CD4-positive, alpha-beta T cell (primary cell): ENCODE measurements at regions of chr2 and their contacts with region 1.

Region 1: GRCh38 chr2:99154643-99155536 is at the starts of genes LIPT1 and TSGA10:
- DNase-seq: peak; percentile 81 to 97 (median 89)
- ATAC-seq: peak; percentile 93
- H3K4me3 ChIP-seq: peak within 1 kb of the TSS; percentile 69
- H3K4me3 Mint-ChIP-seq: no peak within 1 kb of the TSS
- H3K27ac ChIP-seq: peak within 1 kb of the TSS; percentile 93 to 95
- H3K27ac Mint-ChIP-seq: no peak within 1 kb of the TSS
- H3K4me1 ChIP-seq: peaks cover 21% of the 10 kb centered on the region
- H3K4me1 Mint-ChIP-seq: peaks cover 43% of the 10 kb centered on the region
- H3K27me3 ChIP-seq: no peaks in the 10 kb centered on the region
- H3K27me3 Mint-ChIP-seq: no peaks in the 10 kb centered on the region
- CTCF ChIP-seq: no peak
- total RNA-seq, gene LIPT1: 12.5 to 13.3 TPM
- total RNA-seq, gene TSGA10: 10.6 to 11.0 TPM

Region 2: DNA sequence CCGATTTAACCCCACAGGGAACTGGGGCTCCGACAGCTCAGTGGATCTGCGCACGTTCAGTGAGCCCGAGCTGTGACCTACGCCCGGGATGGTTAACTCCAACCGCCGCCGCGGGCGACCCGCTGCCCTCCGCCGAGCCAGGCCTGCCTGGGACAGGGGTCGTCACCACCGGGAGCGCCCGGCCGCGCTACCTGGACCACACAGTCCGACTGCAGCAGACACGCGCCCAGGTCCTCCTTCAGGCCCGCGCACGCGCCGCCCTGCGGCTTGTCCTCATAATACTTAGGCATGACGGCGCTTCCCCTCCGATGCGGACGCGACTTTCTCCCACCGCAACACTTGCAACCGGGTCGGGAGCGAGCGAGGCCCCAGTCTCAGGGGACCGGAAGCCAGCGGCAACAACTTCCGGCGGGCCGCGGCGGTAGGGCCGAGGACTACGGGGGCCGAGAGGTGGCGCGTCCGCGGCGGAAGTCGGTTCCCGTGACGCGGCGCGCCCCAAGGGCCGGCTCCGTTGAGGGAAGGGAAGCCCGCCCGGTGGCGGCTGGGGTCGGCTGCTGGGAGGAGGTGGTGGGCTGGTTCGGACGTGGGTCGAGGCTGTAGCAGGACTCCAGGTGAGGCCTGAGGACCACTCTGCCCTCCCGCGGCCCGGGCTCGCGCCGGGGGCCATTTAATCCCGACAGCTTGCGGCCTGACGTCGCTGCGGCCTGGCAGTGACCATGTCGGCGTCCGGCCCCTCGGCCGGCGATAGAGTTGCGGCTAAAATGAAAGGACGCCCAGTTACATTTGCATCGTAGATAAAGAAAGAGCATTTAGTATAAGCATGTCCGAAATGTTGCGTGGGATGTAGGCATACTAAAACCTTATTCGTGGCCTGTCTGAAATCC is 546.5 kb before region 1 on chr2 and contains the starts of genes COA5 and UNC50:
- CTCF ChIA-PET with region 1: no interaction called
- POLR2A ChIA-PET with region 1: interaction called, 5 read pairs
- intact Hi-C with region 1: loop called in 1 of 2 experiments (anchors 10 kb)
- DNase-seq: peak; percentile 84 to 95 (median 89)
- ATAC-seq: peak; percentile 83
- H3K4me3 ChIP-seq: peak within 1 kb of the TSS; percentile 77
- H3K4me3 Mint-ChIP-seq: peak within 1 kb of the TSS; percentile 85
- H3K27ac ChIP-seq: peak within 1 kb of the TSS; percentile 87 to 91
- H3K27ac Mint-ChIP-seq: peak within 1 kb of the TSS; percentile 89
- H3K4me1 ChIP-seq: peaks cover 43% of the 10 kb centered on the region
- H3K4me1 Mint-ChIP-seq: peaks cover 72% of the 10 kb centered on the region
- H3K27me3 ChIP-seq: no peaks in the 10 kb centered on the region
- H3K27me3 Mint-ChIP-seq: no peaks in the 10 kb centered on the region
- CTCF ChIP-seq: no peak
- total RNA-seq, gene COA5: 29.2 to 30.1 TPM
- total RNA-seq, gene UNC50: 17.1 to 17.5 TPM

Region 3: DNA sequence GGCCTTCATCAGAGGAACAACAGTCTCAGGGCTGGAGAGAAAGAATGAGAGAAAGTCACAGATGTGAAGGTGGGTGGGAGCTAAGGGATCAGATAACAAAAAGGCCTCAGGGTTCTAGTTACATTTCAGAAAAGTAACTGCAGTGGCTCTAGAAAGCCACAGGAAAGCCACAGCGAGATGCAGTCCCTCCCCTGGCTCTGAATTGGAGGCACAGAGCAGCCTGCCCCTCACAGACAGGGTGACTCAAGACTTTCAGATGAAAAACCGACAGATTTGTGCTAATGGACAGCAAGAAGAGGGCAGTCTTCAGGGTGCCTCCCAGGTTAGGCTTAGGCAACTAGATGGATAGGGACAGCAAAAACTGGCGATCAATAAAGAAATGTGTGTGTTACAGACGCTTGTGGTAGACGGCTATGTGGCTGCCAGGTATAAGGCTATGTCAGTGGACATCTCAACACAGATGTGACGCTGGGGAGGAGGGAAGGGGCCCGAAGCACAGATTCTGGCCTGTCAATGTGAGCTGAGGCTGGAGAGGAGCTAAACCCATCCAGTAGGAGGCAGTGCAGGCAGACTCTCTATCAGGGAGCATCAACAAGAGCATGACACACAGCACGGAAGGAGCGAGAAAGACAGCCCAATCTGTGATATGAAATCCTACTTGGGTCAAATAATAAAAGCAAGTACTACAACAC is 520.3 kb before region 1 on chr2:
- CTCF ChIA-PET with region 1: no interaction called
- POLR2A ChIA-PET with region 1: no interaction called
- intact Hi-C with region 1: loop called in 1 of 2 experiments (anchors 10 kb)
- DNase-seq: peak in 10 of 14 experiments; percentile 28 to 76 (median 48)
- ATAC-seq: peak; percentile 60
- H3K4me3 ChIP-seq: no peak overlapping the region
- H3K4me3 Mint-ChIP-seq: no peak overlapping the region
- H3K27ac ChIP-seq: peak overlapping the region; percentile 9 to 25
- H3K27ac Mint-ChIP-seq: peak overlapping the region; percentile 83
- H3K4me1 ChIP-seq: peaks cover 31% of the 10 kb centered on the region
- H3K4me1 Mint-ChIP-seq: peaks cover 40% of the 10 kb centered on the region
- H3K27me3 ChIP-seq: no peaks in the 10 kb centered on the region
- H3K27me3 Mint-ChIP-seq: no peaks in the 10 kb centered on the region
- CTCF ChIP-seq: no peak

Region 4: DNA sequence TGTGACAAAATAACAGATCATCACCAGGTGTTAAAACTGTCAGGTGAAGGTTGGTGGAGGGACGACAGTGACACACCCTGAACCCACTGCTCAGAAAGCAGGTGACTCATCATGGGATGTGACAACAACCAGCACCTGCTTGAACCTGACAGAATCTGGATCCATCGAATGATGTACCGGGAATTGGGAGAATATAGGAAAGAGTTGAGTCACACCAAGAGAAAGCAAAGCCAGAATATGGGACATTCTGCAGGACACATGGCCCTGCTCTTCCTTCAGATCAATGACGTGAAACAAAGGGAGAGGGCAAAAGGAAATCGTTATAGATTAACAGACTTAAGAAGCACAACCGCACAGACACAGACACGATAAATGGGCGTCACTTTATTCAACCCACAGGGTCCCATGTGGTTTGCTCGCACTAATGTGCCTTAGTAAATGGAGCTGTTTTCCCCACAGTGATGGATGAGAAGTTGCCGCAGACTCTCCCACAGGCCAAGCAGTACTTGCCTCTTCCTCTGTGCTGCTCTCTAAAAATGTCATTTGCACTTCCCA is 319.0 kb before region 1 on chr2:
- CTCF ChIA-PET with region 1: no interaction called
- POLR2A ChIA-PET with region 1: no interaction called
- intact Hi-C with region 1: loop called in 1 of 2 experiments (anchors 10 kb)
- DNase-seq: peak; percentile 36 to 88 (median 51)
- ATAC-seq: peak; percentile 85
- H3K4me3 ChIP-seq: no peak overlapping the region
- H3K4me3 Mint-ChIP-seq: peak overlapping the region; percentile 57
- H3K27ac ChIP-seq: peak overlapping the region; percentile 27 to 48
- H3K27ac Mint-ChIP-seq: peak overlapping the region; percentile 94
- H3K4me1 ChIP-seq: peaks cover 42% of the 10 kb centered on the region
- H3K4me1 Mint-ChIP-seq: peaks cover 46% of the 10 kb centered on the region
- H3K27me3 ChIP-seq: no peaks in the 10 kb centered on the region
- H3K27me3 Mint-ChIP-seq: no peaks in the 10 kb centered on the region
- CTCF ChIP-seq: no peak

Region 5: GRCh38 chr2:99141110-99142108 is 13.5 kb before region 1 on chr2 and contains the start of gene C2orf15:
- CTCF ChIA-PET with region 1: interaction called, 13 read pairs
- POLR2A ChIA-PET with region 1: interaction called, 142 read pairs
- intact Hi-C with region 1: loop called (anchors 1 kb)
- DNase-seq: peak; percentile 92 to 99 (median 97)
- ATAC-seq: peak; percentile 85
- H3K4me3 ChIP-seq: peak within 1 kb of the TSS; percentile 74
- H3K4me3 Mint-ChIP-seq: peak within 1 kb of the TSS; percentile 97
- H3K27ac ChIP-seq: peak within 1 kb of the TSS; percentile 85 to 92
- H3K27ac Mint-ChIP-seq: peak within 1 kb of the TSS; percentile 94
- H3K4me1 ChIP-seq: peaks cover 8% of the 10 kb centered on the region
- H3K4me1 Mint-ChIP-seq: peaks cover 33% of the 10 kb centered on the region
- H3K27me3 ChIP-seq: no peaks in the 10 kb centered on the region
- H3K27me3 Mint-ChIP-seq: no peaks in the 10 kb centered on the region
- CTCF ChIP-seq: no peak
- total RNA-seq, gene C2orf15: 2.1 to 2.8 TPM

Region 6: GRCh38 chr2:99337113-99338028 is 182.5 kb after region 1 on chr2 and contains the start of gene EIF5B:
- CTCF ChIA-PET with region 1: interaction called, 9 read pairs
- POLR2A ChIA-PET with region 1: interaction called, 23 read pairs
- intact Hi-C with region 1: no loop called
- DNase-seq: peak; percentile 82 to 97 (median 93)
- ATAC-seq: peak; percentile 58
- H3K4me3 ChIP-seq: peak within 1 kb of the TSS; percentile 89
- H3K4me3 Mint-ChIP-seq: no peak within 1 kb of the TSS
- H3K27ac ChIP-seq: peak within 1 kb of the TSS; percentile 72 to 79
- H3K27ac Mint-ChIP-seq: no peak within 1 kb of the TSS
- H3K4me1 ChIP-seq: peaks cover 29% of the 10 kb centered on the region
- H3K4me1 Mint-ChIP-seq: peaks cover 40% of the 10 kb centered on the region
- H3K27me3 ChIP-seq: no peaks in the 10 kb centered on the region
- H3K27me3 Mint-ChIP-seq: no peaks in the 10 kb centered on the region
- CTCF ChIP-seq: peak; percentile 74
- total RNA-seq, gene EIF5B: 27.8 to 33.2 TPM